IMR-90 (cell line): ENCODE measurements at regions of chr17 and their contacts with region 1.

Region 1: DNA sequence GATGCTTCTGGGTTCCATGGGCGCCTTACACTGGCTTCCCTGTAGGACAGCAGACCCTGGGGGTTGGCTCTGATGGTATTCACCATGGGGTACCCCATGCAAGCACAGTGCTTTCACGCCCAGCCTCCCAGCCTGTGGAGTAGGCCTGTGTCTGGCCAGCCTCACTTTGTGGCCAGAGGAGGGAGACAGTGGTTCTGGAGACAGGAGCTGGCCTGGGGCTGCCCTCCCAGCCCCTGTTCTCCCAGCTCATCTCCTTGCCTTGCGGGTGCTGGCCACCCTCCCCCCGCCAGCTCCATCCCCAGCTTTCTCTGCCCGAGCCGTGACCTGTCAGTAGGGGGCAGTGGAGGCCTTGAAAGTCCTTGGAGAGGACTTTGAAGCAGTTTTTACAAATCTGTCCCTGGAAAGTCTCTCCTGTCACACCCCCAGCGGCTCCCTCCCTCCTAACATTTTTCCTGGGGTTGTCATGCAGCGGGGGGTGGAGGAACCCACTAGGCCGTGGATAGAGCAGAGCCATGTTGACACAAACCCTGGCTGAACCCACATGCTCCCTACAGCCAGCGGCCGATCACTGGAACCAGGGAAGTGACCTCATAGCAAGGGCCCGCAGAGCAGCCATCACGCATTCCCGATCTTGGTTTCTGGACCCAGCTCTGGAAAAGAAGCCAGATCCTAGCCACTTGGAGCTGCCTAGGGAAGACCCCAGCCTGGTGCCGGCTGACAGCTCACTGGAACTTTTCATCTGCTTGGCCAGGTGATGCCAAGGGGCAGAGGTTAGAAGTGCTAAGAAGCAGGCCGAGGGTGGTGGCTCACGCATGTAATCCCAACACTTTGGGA is 289.4 kb downstream of the SEC14L1 start:
- DNase-seq: peak; percentile 99
- ATAC-seq: peak; percentile 77
- H3K4me3 ChIP-seq: no peak overlapping the region
- H3K27ac ChIP-seq: peak overlapping the region; percentile 90
- H3K4me1 ChIP-seq: peaks cover 76% of the 10 kb centered on the region
- H3K27me3 ChIP-seq: no peaks in the 10 kb centered on the region
- CTCF ChIP-seq: peak; percentile 96
- POLR2A ChIP-seq: peak; percentile 40; the same call in 1 of the 2 replicates
- RAD21 ChIP-seq: peak; percentile 87

Region 2: GRCh38 chr17:77319211-77320043 is 110.7 kb before region 1 on chr17:
- CTCF ChIA-PET with region 1: interaction called, 3 read pairs
- POLR2A ChIA-PET with region 1: no interaction called
- dilution Hi-C with region 1: no loop called
- in situ Hi-C with region 1: loop called (anchors 5 kb)
- intact Hi-C with region 1: no loop called
- DNase-seq: peak; percentile 86
- ATAC-seq: peak; percentile 48
- H3K4me3 ChIP-seq: peak overlapping the region; percentile 36; the same call in 1 of the 2 replicates
- H3K27ac ChIP-seq: peak overlapping the region; percentile 96
- H3K4me1 ChIP-seq: peaks cover 59% of the 10 kb centered on the region
- H3K27me3 ChIP-seq: no peaks in the 10 kb centered on the region
- CTCF ChIP-seq: no peak
- POLR2A ChIP-seq: peak; percentile 41; the same call in 1 of the 2 replicates
- RAD21 ChIP-seq: no peak

Region 3: DNA sequence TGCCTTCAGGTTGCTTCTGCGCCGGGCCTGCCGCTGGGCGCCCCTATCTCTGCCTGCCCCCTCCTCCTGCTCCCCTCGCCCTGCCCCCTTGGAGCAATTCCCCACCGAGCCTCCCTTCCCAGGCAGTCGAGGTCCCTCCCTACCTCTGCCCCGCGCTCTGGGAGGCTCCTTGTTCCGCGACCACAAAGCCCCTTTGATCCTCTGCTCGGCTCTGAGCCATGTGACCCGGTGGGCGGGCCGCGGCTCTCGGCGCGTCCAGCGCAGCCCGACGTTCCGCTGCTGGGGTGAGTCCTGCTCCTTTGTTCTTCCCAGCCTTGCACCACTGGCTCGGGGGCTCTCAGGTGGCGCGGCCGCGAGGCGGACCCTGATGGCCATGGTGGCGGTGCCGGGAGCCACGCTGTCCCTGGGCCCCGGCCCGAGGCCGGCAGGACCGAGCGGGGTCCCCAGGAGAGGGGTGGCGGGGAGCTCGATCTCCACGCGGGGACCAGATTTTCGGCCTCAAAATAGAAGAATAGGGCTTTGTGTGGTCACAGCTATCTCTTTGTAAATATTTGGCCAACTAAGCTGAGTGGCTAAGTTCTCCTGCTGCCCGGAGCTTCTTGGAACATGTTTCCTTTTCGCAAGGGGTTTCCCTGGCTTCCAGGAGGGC is 21.2 kb after region 1 on chr17:
- CTCF ChIA-PET with region 1: interaction called, 4 read pairs
- POLR2A ChIA-PET with region 1: no interaction called
- dilution Hi-C with region 1: no loop called
- in situ Hi-C with region 1: no loop called
- intact Hi-C with region 1: loop called (anchors 2 kb)
- DNase-seq: peak; percentile 69
- ATAC-seq: peak; percentile 36
- H3K4me3 ChIP-seq: peak overlapping the region; percentile 39
- H3K27ac ChIP-seq: peak overlapping the region; percentile 80
- H3K4me1 ChIP-seq: peaks cover 63% of the 10 kb centered on the region
- H3K27me3 ChIP-seq: no peaks in the 10 kb centered on the region
- CTCF ChIP-seq: no peak
- POLR2A ChIP-seq: no peak
- RAD21 ChIP-seq: no peak

Region 4: GRCh38 chr17:77494664-77495435 is 64.7 kb after region 1 on chr17:
- CTCF ChIA-PET with region 1: interaction called, 4 read pairs
- POLR2A ChIA-PET with region 1: no interaction called
- dilution Hi-C with region 1: no loop called
- in situ Hi-C with region 1: loop called (anchors 5 kb)
- intact Hi-C with region 1: loop called (anchors 1 kb)
- DNase-seq: peak; percentile 68
- ATAC-seq: peak; percentile 87
- H3K4me3 ChIP-seq: no peak overlapping the region
- H3K27ac ChIP-seq: no peak overlapping the region
- H3K4me1 ChIP-seq: peaks cover 3% of the 10 kb centered on the region; the same call in 1 of the 2 replicates
- H3K27me3 ChIP-seq: no peaks in the 10 kb centered on the region
- CTCF ChIP-seq: peak; percentile 85
- POLR2A ChIP-seq: no peak
- RAD21 ChIP-seq: peak; percentile 94

Region 5: GRCh38 chr17:78013683-78014467 is 583.7 kb after region 1 on chr17:
- CTCF ChIA-PET with region 1: no interaction called
- POLR2A ChIA-PET with region 1: no interaction called
- dilution Hi-C with region 1: no loop called
- in situ Hi-C with region 1: no loop called
- intact Hi-C with region 1: loop called (anchors 5 kb)
- DNase-seq: peak; percentile 77
- ATAC-seq: peak; percentile 81
- H3K4me3 ChIP-seq: no peak overlapping the region
- H3K27ac ChIP-seq: no peak overlapping the region
- H3K4me1 ChIP-seq: no peaks in the 10 kb centered on the region
- H3K27me3 ChIP-seq: no peaks in the 10 kb centered on the region
- CTCF ChIP-seq: peak; percentile 92
- POLR2A ChIP-seq: no peak
- RAD21 ChIP-seq: peak; percentile 86